ENCODE measurements at regions of chr20 and their contacts with region 1.

Region 1: GRCh38 chr20:58308680-58309527 is 611 bp upstream of the RAB22A start:
- DNase-seq: peak in 8 of 10 donors; percentile 20 to 82 (median 64)
- ATAC-seq: peak; percentile 11 to 18
- H3K4me3 Mint-ChIP-seq: peak overlapping the region; percentile 62 to 88 (median 72)
- H3K27ac Mint-ChIP-seq: peak overlapping the region; percentile 87 to 99 (median 98)
- H3K4me1 Mint-ChIP-seq: peaks cover 18 to 75% (median 60%) of the 10 kb centered on the region in 4 donors
- H3K27me3 Mint-ChIP-seq: no peaks in the 10 kb centered on the region

Region 2: GRCh38 chr20:58388882-58389323 is 80.0 kb after region 1 on chr20 and contains the start of gene VAPB:
- POLR2A ChIA-PET with region 1: interaction called, 21 read pairs
- DNase-seq: peak; percentile 93 to 99 (median 98)
- ATAC-seq: peak; percentile 95 to 96
- H3K4me3 Mint-ChIP-seq: peak within 1 kb of the TSS; percentile 87 to 97 (median 93)
- H3K27ac Mint-ChIP-seq: peak within 1 kb of the TSS; percentile 90 to 99 (median 98)
- H3K4me1 Mint-ChIP-seq: peaks cover 30 to 47% (median 44%) of the 10 kb centered on the region in 4 donors
- H3K27me3 Mint-ChIP-seq: peaks cover 0 to 4% (median 0%) of the 10 kb centered on the region in 5 donors
- polyA plus RNA-seq, gene VAPB: 24.7 to 34.1 (median 28.4) TPM